Ovary (tissue), 10 donors: ENCODE measurements at regions of chr1 and their contacts with region 1.

Region 1: DNA sequence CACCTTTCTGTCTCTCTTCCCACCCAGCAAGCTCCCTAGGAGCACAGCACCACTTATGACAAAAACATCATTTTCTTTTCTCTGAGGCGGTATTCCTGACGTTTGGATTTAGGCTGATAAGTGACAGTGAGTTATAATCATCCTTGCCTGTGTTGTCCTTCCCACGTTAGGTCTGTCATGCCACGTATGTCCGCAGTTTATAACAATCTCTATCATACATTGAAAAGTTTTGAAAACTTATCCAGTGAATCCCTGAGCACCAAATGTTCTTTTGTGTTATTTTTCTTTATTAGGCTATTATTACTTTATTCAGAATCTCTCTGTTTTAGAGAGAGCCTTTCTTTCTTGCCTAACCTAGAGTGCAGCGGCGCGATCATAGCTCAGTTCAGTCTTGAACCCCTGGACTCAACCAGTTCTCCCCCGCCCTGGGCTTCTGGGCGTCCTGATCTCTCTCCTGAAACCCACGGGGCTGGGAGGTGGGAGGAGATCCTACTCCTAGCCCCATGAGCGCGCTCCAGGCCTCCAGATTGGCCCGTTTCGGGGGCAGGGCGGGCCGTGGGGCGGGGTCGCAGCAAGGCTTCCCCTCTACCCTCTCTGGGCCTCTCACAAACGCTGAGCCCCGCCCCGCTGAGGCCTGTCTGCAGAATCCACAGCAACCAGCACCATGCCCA is at the start of gene GSTM2:
- DNase-seq: peak; percentile 93 to 96 (median 95)
- H3K4me3 ChIP-seq: peak within 1 kb of the TSS; percentile 49
- H3K27ac ChIP-seq: peak within 1 kb of the TSS; percentile 16 to 54
- H3K4me1 ChIP-seq: peaks cover 5% of the 10 kb centered on the region
- H3K27me3 ChIP-seq: no peaks in the 10 kb centered on the region
- CTCF ChIP-seq: no peak
- EP300 ChIP-seq: no peak
- POLR2A ChIP-seq: peak; percentile 16
- total RNA-seq, gene GSTM2: 101 to 318 (median 195) TPM

Region 2: DNA sequence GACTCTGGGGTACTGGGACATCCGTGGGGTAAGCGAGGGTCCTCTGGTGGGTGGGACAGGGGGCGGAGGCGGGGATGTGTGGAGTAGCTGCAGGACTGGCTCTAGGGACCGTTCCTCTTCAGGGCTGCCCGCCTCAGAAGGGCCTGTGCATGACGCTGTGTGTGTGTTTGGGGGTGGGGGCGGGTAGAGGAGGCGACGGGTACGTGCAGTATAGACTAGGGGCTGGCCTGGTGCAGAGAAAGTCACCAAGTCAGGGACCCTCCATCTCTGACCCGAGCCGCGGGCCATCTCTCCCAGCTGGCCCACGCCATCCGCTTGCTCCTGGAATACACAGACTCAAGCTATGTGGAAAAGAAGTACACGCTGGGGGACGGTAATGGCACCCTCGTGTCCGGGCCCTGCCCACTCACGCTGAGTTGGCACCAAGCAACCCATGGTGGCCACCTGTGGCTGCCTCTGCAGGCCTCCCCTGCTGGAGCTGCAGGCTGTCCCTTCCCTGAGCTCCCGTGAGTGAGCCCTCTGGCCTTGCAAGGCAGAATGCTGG is 44.8 kb after region 1 on chr1:
- intact Hi-C with region 1: loop called in 1 of 4 experiments (anchors 5 kb)
- DNase-seq: peak in 2 of 5 donors; percentile 49
- H3K4me3 ChIP-seq: peak overlapping the region; percentile 33
- H3K27ac ChIP-seq: peak overlapping the region in 1 of 2 donors; percentile 77
- H3K4me1 ChIP-seq: peaks cover 15% of the 10 kb centered on the region
- H3K27me3 ChIP-seq: no peaks in the 10 kb centered on the region
- CTCF ChIP-seq: no peak
- EP300 ChIP-seq: no peak
- POLR2A ChIP-seq: no peak

Region 3: GRCh38 chr1:109757936-109758766 is 90.6 kb after region 1 on chr1:
- intact Hi-C with region 1: loop called in 1 of 4 experiments (anchors 5 kb)
- DNase-seq: peak in 4 of 5 donors; percentile 8 to 49 (median 22)
- H3K4me3 ChIP-seq: no peak overlapping the region
- H3K27ac ChIP-seq: peak overlapping the region; percentile 70 to 91
- H3K4me1 ChIP-seq: peaks cover 20% of the 10 kb centered on the region
- H3K27me3 ChIP-seq: no peaks in the 10 kb centered on the region
- CTCF ChIP-seq: no peak
- EP300 ChIP-seq: no peak
- POLR2A ChIP-seq: no peak